ENCODE measurements at regions of chr20 and their contacts with region 1.

Region 1: DNA sequence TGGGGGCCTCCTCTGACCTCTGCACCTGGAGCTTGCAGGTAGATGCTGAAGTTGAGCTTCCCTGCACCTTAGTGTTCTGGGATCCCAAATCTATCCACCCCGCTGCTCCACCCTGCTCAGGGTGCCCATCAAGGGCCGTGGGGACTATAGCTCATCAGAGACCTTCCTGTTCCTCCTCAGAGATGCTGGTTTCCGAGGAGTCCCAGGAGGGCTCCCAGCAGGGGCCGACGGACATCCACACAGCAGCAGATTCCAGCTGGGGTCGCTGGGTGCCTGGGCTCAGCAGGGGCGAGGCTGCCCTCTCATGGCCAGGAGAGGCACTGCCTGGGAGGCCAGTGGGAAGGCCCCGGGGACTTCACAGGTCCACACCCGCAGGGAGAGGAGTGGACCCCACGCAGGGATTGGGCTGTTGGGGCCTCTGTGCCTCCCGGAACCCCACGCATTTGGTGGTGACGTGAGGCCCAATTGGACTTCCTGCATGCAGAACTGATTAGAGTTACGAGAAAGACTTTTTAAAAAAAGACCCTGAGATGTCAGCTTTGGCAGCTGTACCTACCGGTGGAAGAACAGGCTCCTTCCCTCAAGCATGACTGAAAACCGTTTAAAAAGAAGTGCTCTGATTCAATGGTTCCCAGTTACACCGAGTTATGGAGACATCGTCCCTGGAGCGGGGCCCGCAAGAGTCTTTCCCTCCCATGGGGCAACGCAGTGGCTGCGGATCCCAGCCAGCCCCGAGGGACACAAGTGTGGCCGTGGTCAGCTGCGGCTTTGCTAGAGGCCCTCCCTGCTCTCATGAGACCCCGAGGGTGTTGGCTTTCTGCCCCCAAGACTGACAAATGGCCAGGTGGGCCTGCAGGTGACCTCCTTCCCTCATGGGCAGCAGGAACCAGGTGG is 25.3 kb upstream of the SLCO4A1 start:
- DNase-seq: peak; percentile 95
- H3K4me3 ChIP-seq: no peak overlapping the region; a peak in 1 of 4 replicates
- H3K27ac ChIP-seq: no peak overlapping the region
- H3K4me1 ChIP-seq: peaks cover 0 to 3% of the 10 kb centered on the region in 2 experiments; a peak in 1 of 4 replicates
- H3K27me3 ChIP-seq: no peaks in the 10 kb centered on the region
- CTCF ChIP-seq: peak; percentile 90
- EP300 ChIP-seq: peak in 1 of 2 experiments; percentile 18; a peak in 1 of 4 replicates
- RAD21 ChIP-seq: peak; percentile 96

Region 2: DNA sequence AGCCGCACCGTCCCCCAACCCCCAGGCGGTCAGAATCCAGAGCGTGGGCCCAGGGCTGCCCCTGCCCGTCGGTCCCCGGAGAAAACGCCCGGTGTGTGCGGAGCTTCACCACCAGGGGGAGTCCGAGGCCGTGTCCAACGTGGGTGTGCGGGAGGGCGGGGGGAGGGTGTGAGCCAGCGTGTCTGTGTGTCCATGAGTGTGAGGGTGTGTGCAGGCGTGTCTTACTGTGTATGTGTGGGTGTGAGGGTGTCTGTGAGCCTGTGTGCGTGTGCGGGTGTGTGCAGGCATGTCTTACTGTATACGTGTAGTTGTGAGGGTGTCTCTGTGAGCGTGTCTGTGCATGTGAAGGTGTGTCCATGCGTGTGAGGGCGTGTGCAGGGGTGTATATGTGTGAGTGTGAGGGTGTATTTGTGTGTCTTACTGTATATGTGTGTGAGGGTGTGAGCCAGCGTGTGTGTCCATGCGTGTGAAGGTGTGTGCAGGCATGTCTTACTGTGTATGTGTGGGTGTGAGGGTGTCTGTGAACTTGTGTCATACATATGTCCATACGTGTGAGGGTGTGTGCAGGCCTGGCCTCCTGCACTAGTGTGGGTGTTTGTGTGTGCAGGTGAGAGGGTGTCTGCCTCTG is 116.6 kb before region 1 on chr20:
- CTCF ChIA-PET with region 1: interaction called, 101 read pairs
- POLR2A ChIA-PET with region 1: no interaction called
- DNase-seq: peak; percentile 92
- H3K4me3 ChIP-seq: no peak overlapping the region
- H3K27ac ChIP-seq: no peak overlapping the region
- H3K4me1 ChIP-seq: peaks cover 0 to 11% of the 10 kb centered on the region in 2 experiments; a peak in 1 of 4 replicates
- H3K27me3 ChIP-seq: no peaks in the 10 kb centered on the region
- CTCF ChIP-seq: peak; percentile 73
- EP300 ChIP-seq: no peak
- RAD21 ChIP-seq: peak; percentile 83

Region 3: GRCh38 chr20:62543470-62544302 is 73.3 kb before region 1 on chr20:
- CTCF ChIA-PET with region 1: interaction called, 11 read pairs
- POLR2A ChIA-PET with region 1: no interaction called
- DNase-seq: no peak
- H3K4me3 ChIP-seq: no peak overlapping the region
- H3K27ac ChIP-seq: no peak overlapping the region
- H3K4me1 ChIP-seq: peaks cover 0 to 12% of the 10 kb centered on the region in 2 experiments; a peak in 1 of 4 replicates
- H3K27me3 ChIP-seq: no peaks in the 10 kb centered on the region; the same call in 1 of the 2 replicates
- CTCF ChIP-seq: no peak
- EP300 ChIP-seq: no peak
- RAD21 ChIP-seq: no peak

Region 4: DNA sequence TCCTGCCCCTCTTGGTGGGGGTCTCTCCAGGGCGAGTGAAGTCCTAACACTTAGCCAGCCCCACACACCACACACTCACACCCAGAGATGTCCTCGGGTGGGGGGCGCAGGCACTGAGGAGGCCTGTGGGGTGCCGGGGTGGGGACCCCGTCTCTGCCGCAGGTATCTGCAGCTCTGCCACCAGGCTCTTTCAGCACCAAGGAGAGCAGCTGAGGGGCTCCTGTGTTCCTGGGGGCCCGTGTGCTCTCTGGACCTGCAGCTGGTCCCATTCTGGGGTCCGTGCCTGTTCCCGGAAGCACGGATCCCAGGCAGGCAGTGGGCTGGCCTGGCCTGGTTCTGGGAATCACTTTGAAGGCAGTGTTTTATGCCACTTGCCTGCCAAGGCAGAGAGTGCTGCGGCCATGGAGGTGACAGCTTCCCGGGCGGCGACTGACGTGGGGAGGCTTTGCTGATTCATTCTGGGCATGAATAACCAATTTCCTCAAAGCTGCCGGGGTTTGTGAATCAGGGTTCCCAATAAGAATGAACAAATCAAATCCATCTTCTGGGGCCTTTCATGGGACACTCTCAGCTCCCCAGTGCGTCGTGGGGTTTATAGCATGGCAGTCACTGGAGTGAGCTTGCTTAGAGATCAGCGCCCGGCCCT is 29.1 kb before region 1 on chr20:
- CTCF ChIA-PET with region 1: interaction called, 53 read pairs
- POLR2A ChIA-PET with region 1: no interaction called
- DNase-seq: no peak
- H3K4me3 ChIP-seq: no peak overlapping the region
- H3K27ac ChIP-seq: no peak overlapping the region
- H3K4me1 ChIP-seq: no peaks in the 10 kb centered on the region; a peak in 1 of 4 replicates
- H3K27me3 ChIP-seq: no peaks in the 10 kb centered on the region
- CTCF ChIP-seq: no peak
- EP300 ChIP-seq: no peak
- RAD21 ChIP-seq: no peak

Region 5: DNA sequence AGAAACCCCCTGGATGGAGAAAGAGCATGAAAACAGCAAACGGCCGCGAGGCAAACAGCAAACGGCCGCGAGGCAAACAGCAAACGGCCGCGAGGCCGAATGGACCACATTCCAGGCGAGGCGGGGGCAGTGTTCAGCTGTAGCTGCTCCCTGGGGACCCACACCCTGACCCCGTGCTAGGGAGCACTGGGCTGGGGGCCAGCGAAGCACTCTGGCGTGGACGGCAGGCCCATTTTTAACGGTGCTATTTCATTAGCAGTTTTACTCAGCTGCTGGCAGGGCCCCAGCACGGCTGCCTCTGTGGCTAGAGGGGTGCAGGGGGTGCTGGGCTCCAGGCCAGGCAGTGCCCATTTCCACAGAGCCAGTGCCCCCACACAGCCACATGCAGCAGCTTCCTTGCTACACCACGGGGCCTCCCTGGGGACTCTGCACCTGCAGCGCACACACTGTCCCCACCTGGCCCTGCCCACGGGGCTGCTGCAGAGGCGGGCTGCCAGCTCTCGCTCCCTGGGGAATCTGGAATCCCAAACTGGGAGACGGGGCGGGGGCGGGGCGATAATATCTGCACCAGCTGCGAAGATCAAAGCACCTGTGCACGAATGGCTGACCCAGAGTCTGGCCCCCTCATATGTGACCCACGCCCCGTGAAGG is 10.3 kb before region 1 on chr20:
- CTCF ChIA-PET with region 1: interaction called, 38 read pairs
- POLR2A ChIA-PET with region 1: no interaction called
- DNase-seq: no peak
- H3K4me3 ChIP-seq: no peak overlapping the region
- H3K27ac ChIP-seq: no peak overlapping the region; a peak in 1 of 4 replicates
- H3K4me1 ChIP-seq: peaks cover 8 to 17% of the 10 kb centered on the region in 2 experiments; a peak in 3 of 4 replicates
- H3K27me3 ChIP-seq: no peaks in the 10 kb centered on the region
- CTCF ChIP-seq: no peak
- EP300 ChIP-seq: 0 out of 4 replicates have a peak, but pooled peaks of 1 of the 2 experiments have one; percentile 14
- RAD21 ChIP-seq: no peak

Region 6: GRCh38 chr20:62661647-62662046 is 44.7 kb after region 1 on chr20:
- CTCF ChIA-PET with region 1: no interaction called
- POLR2A ChIA-PET with region 1: no interaction called
- DNase-seq: no peak
- H3K4me3 ChIP-seq: no peak overlapping the region
- H3K27ac ChIP-seq: no peak overlapping the region
- H3K4me1 ChIP-seq: peaks cover 0 to 10% of the 10 kb centered on the region in 2 experiments; a peak in 1 of 4 replicates
- H3K27me3 ChIP-seq: no peaks in the 10 kb centered on the region
- CTCF ChIP-seq: no peak
- EP300 ChIP-seq: no peak
- RAD21 ChIP-seq: no peak

Region 7: GRCh38 chr20:62787321-62787720 is 170.3 kb after region 1 on chr20:
- CTCF ChIA-PET with region 1: interaction called, 20 read pairs
- POLR2A ChIA-PET with region 1: no interaction called
- DNase-seq: no peak
- H3K4me3 ChIP-seq: no peak overlapping the region
- H3K27ac ChIP-seq: no peak overlapping the region
- H3K4me1 ChIP-seq: peaks cover 3 to 37% of the 10 kb centered on the region in 2 experiments; a peak in 2 of 4 replicates
- H3K27me3 ChIP-seq: no peaks in the 10 kb centered on the region
- CTCF ChIP-seq: no peak
- EP300 ChIP-seq: no peak
- RAD21 ChIP-seq: no peak